ENCODE measurements at regions of chr13 and their contacts with region 1.

Region 1: DNA sequence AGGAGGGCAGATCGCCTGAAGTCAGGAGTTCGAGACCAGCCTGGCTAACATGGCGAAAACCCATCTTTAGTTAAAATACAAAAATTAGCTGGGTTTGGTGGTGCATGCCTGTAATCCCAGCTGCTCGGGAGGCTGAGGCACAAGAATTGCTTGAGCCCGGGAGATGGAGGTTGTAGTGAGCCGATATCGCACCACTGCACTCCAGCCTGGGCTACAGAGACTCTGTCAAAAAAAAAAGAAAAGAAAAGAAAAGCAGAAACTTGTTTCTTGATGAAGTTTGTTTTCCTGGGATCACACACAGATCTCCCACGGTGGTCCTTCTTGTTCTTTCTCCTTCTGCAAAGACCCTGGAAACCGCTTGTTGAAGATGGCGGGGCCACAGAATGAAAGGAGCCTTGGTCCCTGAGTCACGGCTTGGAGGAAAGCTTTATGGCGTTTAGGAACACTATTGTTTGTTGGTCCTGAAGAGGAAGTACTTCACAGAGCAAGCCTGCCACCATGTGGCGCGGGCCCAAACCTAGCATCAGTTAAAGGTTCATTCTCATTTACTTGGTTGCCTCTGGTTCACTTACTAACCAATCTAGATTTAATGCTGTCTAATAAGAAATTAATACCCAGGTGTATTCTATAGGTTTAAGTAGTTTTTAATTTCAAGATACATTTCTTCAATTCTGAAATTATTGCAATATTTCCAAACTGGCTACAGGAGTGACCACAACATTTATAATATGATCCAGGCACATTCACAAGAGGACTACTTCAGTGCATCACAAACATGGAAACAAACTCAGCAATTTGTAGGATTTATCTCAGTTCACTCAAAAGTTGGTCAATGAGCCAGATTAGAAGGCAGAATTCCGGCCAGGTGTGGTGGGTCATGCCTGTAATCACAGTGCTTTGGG is 21.3 kb upstream of the ARL11 start:
- DNase-seq: peak; percentile 78
- ATAC-seq: peak; percentile 98
- H3K4me3 ChIP-seq: peak overlapping the region; percentile 1 to 42
- H3K27ac ChIP-seq: no peak overlapping the region
- H3K4me1 ChIP-seq: peaks cover 0 to 5% of the 10 kb centered on the region in 2 experiments; a peak in 2 of 4 replicates
- H3K27me3 ChIP-seq: no peaks in the 10 kb centered on the region
- CTCF ChIP-seq: peak; percentile 73 to 87 (median 74)
- POLR2A ChIP-seq: no peak
- RAD21 ChIP-seq: peak; percentile 94

Region 2: DNA sequence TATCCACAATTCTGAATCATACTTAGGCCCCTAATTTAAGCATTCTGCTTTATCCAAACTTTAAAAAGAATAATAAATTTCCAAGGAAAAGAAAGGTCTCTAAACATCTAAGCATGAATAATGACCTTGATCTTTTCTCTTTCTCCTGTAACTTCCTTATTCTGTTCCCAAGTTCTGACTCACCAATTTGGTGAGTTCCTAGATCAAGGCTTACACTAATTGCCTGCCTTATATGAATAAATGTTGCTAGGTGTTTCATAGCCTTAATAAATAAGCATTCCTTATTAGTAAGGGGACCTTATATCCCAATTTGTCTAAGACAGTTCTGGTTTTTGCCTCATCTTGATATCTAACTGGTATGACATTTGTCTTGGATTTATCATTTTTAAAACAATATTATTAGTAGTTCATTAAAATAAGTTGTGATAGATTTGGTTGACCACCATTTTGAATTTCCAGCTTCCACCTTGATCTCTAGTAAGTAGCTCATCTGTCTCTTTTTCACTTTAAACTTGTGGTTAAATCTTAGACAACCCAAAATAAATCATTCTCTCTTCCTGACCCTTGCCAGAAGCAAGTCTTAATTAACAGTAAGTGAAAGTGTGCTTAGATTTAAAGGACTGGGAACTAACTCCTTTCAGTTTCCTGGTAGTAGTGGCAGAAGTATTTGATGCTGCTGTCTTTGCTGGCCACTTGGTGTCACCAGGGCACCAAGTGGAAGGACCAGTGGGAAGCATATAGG is 508.1 kb before region 1 on chr13:
- CTCF ChIA-PET with region 1: interaction called, 3 read pairs
- POLR2A ChIA-PET with region 1: no interaction called
- RAD21 ChIA-PET with region 1: no interaction called
- intact Hi-C with region 1: loop called (anchors 10 kb)
- DNase-seq: peak; percentile 24
- ATAC-seq: peak; percentile 79
- H3K4me3 ChIP-seq: peak overlapping the region in 1 of 2 experiments; percentile 18; a peak in 1 of 4 replicates
- H3K27ac ChIP-seq: peak overlapping the region; percentile 58; the same call in 1 of the 2 replicates
- H3K4me1 ChIP-seq: peaks cover 26 to 30% of the 10 kb centered on the region in 2 experiments
- H3K27me3 ChIP-seq: no peaks in the 10 kb centered on the region
- CTCF ChIP-seq: peak; percentile 24 to 57 (median 41); a peak in 4 of 6 replicates
- POLR2A ChIP-seq: no peak
- RAD21 ChIP-seq: peak; percentile 60; the same call in 1 of the 2 replicates

Region 3: DNA sequence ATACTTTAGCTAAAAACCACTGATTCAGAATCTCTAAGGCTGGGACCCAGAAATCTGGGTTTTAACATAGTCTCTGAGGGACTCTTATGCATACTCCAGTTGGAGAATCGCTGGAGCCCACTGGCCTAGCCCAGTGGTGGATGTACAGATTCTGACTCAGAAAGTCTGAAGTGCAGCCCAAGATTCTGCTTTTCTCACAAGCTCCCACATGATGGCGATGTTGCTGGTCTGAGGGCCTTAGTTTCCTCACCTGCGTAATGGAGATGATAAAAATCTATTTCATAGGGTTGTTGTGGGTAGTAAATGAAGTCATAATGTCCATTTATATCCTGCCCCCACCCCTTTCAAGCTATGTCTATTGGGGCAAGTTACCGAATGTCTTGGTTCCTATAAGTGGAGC is 367.0 kb before region 1 on chr13:
- CTCF ChIA-PET with region 1: no interaction called
- POLR2A ChIA-PET with region 1: no interaction called
- RAD21 ChIA-PET with region 1: no interaction called
- intact Hi-C with region 1: loop called (anchors 1 kb)
- DNase-seq: peak; percentile 24
- ATAC-seq: peak; percentile 96
- H3K4me3 ChIP-seq: no peak overlapping the region
- H3K27ac ChIP-seq: no peak overlapping the region
- H3K4me1 ChIP-seq: no peaks in the 10 kb centered on the region
- H3K27me3 ChIP-seq: peaks cover 9% of the 10 kb centered on the region; the same call in 1 of the 2 replicates
- CTCF ChIP-seq: peak; percentile 48 to 71 (median 69); a peak in 5 of 6 replicates
- POLR2A ChIP-seq: no peak
- RAD21 ChIP-seq: peak; percentile 65

Region 4: DNA sequence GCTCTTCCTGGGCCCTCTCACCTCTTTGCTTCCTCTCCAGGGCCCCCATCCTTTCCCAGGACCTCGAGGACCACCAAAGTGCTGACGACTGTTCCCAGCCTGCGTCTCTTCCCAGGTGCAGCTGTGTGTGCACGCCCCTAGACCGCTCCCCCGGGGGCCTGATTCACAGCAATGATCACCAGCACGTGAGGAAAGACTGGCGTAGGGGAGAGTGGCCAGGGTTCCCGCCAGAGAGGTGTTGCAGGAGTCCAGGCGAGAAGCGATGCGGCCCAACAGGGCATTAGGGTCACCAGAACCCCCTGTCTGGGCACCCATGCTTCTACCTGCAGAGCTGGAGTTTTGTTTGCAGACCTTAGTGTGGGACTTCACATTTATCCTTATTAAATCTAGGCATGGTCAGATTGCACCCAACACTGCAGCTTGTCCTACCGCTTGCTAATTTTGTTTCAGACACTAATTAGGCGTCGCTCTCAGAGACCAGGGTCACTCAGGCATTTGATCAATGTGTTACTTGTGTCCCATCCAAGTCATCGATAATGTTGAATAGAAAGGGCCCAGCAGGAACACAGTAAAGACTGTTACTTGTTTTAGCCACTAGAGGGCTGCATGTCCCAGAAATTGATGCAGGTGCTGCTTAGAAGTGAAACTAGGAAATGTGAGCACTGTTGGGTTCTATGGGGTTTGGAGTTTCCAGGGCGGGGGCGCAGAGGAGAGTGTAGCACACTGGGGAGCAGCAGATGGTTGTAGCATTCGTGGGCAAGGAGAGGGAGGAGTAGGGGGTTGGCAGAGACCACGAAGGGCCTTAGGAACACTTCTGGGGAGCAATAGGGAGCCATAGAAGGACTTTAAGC is 306.0 kb before region 1 on chr13:
- CTCF ChIA-PET with region 1: interaction called, 5 read pairs
- POLR2A ChIA-PET with region 1: no interaction called
- RAD21 ChIA-PET with region 1: interaction called in 1 of 2 experiments, 4 read pairs
- intact Hi-C with region 1: loop called (anchors 1 kb)
- DNase-seq: peak; percentile 42
- ATAC-seq: peak; percentile 90
- H3K4me3 ChIP-seq: peak overlapping the region; percentile 20 to 47; a peak in 3 of 4 replicates
- H3K27ac ChIP-seq: no peak overlapping the region
- H3K4me1 ChIP-seq: peaks cover 7 to 20% of the 10 kb centered on the region in 2 experiments
- H3K27me3 ChIP-seq: no peaks in the 10 kb centered on the region
- CTCF ChIP-seq: peak; percentile 82 to 95 (median 87)
- POLR2A ChIP-seq: no peak
- RAD21 ChIP-seq: peak; percentile 96

Region 5: DNA sequence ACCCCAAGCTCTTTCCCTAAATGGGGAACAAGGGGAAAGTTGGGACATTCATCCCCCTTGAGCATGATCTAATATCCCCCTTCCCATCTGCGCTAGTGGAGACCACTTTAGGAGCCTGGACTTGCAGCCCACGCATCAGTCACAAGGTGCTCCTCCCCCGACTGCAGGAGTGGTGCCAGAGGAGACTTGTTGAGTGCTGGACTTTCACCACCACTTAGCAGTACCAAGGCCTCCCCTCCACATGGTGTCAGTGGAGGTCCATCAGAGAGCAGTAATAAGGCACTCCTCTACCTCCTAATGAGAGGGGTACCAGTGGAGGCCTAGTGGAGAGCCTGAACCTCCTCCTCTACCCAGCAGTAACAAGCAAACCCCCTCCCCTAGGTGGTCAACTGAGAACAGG is 185.6 kb before region 1 on chr13:
- CTCF ChIA-PET with region 1: interaction called, 3 read pairs
- POLR2A ChIA-PET with region 1: no interaction called
- RAD21 ChIA-PET with region 1: no interaction called
- intact Hi-C with region 1: loop called (anchors 2 kb)
- DNase-seq: peak; percentile 10
- ATAC-seq: peak; percentile 93
- H3K4me3 ChIP-seq: no peak overlapping the region
- H3K27ac ChIP-seq: no peak overlapping the region
- H3K4me1 ChIP-seq: peaks cover 0 to 4% of the 10 kb centered on the region in 2 experiments; a peak in 1 of 4 replicates
- H3K27me3 ChIP-seq: no peaks in the 10 kb centered on the region
- CTCF ChIP-seq: peak in 2 of 3 experiments; percentile 39 to 40; a peak in 4 of 6 replicates
- POLR2A ChIP-seq: no peak
- RAD21 ChIP-seq: peak; percentile 40; the same call in 1 of the 2 replicates

Region 6: DNA sequence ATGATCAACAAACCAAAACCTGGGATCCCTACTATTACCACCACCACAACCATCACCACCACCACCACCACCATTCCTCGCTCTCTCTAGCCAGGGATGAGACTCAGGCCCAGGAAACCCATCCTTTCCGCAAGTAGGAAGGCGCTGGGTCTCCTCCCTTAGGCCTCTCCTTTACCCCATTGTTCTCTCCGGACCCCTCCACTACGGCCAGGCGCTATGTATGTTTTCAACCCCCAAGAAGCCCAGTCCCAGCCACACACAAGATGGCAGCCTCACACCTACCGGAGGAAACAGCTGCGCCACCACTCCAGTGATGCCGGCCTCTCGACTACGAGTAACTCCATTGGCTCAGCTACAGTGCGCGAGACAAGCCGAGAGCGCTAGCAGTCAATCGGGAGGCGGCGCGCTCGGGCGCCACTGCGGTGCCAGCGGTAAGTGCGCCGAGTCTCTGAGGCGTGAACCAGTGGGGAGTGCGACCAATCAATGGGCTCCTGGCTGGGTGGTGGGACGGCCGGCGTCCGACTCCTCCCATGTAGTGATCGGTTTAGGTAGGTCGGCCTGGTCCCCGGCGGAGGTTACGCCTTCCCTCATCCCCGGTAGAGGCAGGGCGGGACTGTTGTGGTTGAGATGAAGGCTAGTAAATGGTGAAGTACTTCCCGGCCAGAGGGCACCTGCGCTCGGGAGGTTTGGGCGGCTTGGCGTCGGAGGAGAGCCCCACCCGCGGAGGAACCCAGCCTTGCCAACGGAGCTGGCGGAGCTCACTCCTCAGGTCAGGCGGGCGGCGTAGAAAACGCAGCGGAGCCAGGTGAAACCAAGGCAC is 163.1 kb before region 1 on chr13 and contains the starts of genes CAB39L and SETDB2:
- CTCF ChIA-PET with region 1: interaction called, 5 read pairs
- POLR2A ChIA-PET with region 1: interaction called, 3 read pairs
- RAD21 ChIA-PET with region 1: no interaction called
- intact Hi-C with region 1: loop called (anchors 10 kb)
- DNase-seq: peak; percentile 97
- ATAC-seq: peak; percentile 96
- H3K4me3 ChIP-seq: peak within 1 kb of the TSS; percentile 72 to 76
- H3K27ac ChIP-seq: peak within 1 kb of the TSS; percentile 92
- H3K4me1 ChIP-seq: peaks cover 16 to 21% of the 10 kb centered on the region in 2 experiments
- H3K27me3 ChIP-seq: no peaks in the 10 kb centered on the region
- CTCF ChIP-seq: peak in 2 of 3 experiments; percentile 29 to 32; a peak in 2 of 6 replicates
- POLR2A ChIP-seq: no peak
- RAD21 ChIP-seq: no peak
- total RNA-seq, gene CAB39L: 6.1 TPM
- total RNA-seq, gene SETDB2: 5.2 TPM

Region 7: DNA sequence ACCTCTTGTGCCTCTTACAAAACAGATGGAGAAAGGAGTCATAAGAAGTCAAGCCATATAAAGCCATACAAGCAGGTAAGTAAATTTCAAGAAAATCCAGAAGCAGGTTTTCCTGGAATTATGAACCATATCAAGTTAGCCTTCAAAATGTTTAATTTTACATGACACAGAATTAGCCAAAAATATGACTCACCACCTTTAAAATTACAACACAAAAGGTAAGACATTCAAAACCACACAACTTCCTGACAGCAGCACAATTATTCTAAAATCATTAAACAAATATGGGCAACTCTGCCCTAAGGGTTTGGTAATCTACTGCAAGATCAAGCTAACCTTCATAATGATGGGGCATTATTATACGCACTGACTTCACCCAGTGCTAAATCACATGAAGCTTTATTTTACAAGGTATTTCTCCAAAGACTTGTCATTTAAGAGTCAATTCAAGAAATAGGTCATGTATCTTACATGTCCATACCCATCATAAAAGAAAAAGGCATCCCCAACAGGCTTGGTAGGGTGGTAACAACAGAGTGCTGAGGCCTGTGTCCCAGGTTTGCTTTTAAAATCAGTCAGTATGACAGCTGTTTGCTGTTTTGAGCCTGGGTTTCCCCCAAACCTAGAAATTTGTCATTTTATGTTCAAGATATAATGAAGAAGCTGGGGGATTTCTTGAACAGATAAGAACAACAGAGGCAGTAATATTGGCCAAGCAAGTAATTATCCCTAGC is 36.9 kb before region 1 on chr13:
- CTCF ChIA-PET with region 1: no interaction called
- POLR2A ChIA-PET with region 1: no interaction called
- RAD21 ChIA-PET with region 1: no interaction called
- intact Hi-C with region 1: no loop called
- DNase-seq: no peak
- ATAC-seq: no peak
- H3K4me3 ChIP-seq: no peak overlapping the region
- H3K27ac ChIP-seq: no peak overlapping the region
- H3K4me1 ChIP-seq: no peaks in the 10 kb centered on the region
- H3K27me3 ChIP-seq: no peaks in the 10 kb centered on the region
- CTCF ChIP-seq: no peak
- POLR2A ChIP-seq: no peak
- RAD21 ChIP-seq: no peak

Region 8: DNA sequence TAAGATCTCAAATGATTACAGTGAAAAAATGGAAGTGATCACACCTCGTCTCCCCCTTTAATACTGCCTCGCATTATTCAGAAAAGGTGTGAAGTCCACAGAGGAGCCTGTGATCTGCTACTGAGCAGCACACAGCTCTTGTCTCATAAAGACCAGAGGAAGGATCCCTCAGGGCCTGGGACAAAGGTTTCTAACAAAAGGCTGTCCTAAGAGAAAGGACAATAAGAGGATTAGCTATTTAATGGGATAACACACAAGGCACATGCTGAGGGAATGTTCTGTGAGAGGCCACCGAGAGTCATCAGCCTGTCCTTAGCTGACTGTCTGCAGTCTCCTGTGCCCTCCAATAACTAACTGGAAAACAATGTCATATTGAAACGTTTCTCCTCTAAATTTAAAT is 57.6 kb after region 1 on chr13:
- CTCF ChIA-PET with region 1: no interaction called
- POLR2A ChIA-PET with region 1: no interaction called
- RAD21 ChIA-PET with region 1: no interaction called
- intact Hi-C with region 1: no loop called
- DNase-seq: no peak
- ATAC-seq: no peak
- H3K4me3 ChIP-seq: no peak overlapping the region
- H3K27ac ChIP-seq: no peak overlapping the region
- H3K4me1 ChIP-seq: peaks cover 0 to 3% of the 10 kb centered on the region in 2 experiments; a peak in 1 of 4 replicates
- H3K27me3 ChIP-seq: no peaks in the 10 kb centered on the region
- CTCF ChIP-seq: no peak
- POLR2A ChIP-seq: no peak
- RAD21 ChIP-seq: no peak

Measured in HCT116 (cell line).